Sigmoid colon (tissue), 7 donors: ENCODE measurements at regions of chr9 and their contacts with region 1.

Region 1: GRCh38 chr9:37913480-37914153 is 9.7 kb upstream of the SLC25A51 start:
- DNase-seq: peak; percentile 87
- H3K4me3 ChIP-seq: no peak overlapping the region
- H3K27ac ChIP-seq: peak overlapping the region in 2 of 4 donors; percentile 17 to 18
- H3K4me1 ChIP-seq: peaks cover 0 to 10% (median 2%) of the 10 kb centered on the region in 4 donors
- H3K27me3 ChIP-seq: no peaks in the 10 kb centered on the region
- CTCF ChIP-seq: peak; percentile 94 to 98 (median 96)
- EP300 ChIP-seq: no peak
- POLR2A ChIP-seq: no peak

Region 2: DNA sequence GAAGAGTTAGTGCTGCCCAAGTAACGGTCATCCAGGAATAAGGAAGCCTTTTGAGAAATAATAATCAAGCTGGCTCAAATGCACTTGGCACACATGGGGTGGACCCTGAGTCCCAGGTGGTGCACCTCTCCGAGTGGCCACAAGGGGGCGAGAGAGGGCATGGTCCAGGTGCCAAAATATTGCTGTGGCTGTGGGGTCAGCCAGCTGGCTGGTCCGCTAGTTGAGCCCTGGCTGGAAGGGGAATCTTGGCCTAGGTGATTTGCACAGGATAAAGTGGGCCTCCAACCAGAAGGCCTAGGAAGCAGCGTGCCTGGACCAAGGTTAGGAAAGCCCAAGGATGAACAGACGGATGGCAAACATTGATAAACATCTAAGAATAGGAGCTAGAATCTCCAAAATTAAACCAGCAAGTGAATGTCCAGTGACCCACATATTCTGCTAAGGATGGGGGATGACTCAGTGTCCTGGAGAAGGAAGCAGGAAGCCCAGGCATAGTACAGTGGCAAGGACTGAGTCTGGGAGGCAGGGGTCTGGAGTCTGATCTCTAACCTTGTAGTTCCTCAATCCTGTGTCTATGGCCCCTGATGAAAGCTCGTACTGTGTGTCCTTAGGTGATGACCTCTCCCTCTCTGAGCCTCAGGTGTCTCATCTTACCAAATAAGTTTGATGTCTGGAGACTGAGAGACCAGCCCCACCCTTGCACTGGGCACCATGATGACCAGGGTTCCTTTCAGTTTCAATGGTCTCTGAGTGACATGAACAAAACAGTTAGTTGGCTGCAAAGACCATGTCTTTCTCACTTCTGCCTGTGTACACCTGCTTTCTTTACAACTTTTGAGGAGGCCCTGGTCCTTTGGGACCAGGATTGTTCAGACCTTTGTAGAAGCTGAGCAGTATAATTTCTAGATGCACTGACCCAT is 174.6 kb after region 1 on chr9:
- intact Hi-C with region 1: loop called (anchors 1 kb)
- DNase-seq: peak; percentile 86
- H3K4me3 ChIP-seq: no peak overlapping the region
- H3K27ac ChIP-seq: no peak overlapping the region
- H3K4me1 ChIP-seq: peaks cover 0 to 6% (median 2%) of the 10 kb centered on the region in 4 donors
- H3K27me3 ChIP-seq: no peaks in the 10 kb centered on the region
- CTCF ChIP-seq: peak; percentile 56 to 96 (median 80)
- EP300 ChIP-seq: no peak
- POLR2A ChIP-seq: no peak

Region 3: GRCh38 chr9:38160613-38161215 is 247.1 kb after region 1 on chr9:
- intact Hi-C with region 1: loop called (anchors 2 kb)
- DNase-seq: peak; percentile 70
- H3K4me3 ChIP-seq: no peak overlapping the region
- H3K27ac ChIP-seq: no peak overlapping the region
- H3K4me1 ChIP-seq: no peaks in the 10 kb centered on the region
- H3K27me3 ChIP-seq: no peaks in the 10 kb centered on the region
- CTCF ChIP-seq: peak; percentile 37 to 77 (median 60)
- EP300 ChIP-seq: no peak
- POLR2A ChIP-seq: no peak

Region 4: DNA sequence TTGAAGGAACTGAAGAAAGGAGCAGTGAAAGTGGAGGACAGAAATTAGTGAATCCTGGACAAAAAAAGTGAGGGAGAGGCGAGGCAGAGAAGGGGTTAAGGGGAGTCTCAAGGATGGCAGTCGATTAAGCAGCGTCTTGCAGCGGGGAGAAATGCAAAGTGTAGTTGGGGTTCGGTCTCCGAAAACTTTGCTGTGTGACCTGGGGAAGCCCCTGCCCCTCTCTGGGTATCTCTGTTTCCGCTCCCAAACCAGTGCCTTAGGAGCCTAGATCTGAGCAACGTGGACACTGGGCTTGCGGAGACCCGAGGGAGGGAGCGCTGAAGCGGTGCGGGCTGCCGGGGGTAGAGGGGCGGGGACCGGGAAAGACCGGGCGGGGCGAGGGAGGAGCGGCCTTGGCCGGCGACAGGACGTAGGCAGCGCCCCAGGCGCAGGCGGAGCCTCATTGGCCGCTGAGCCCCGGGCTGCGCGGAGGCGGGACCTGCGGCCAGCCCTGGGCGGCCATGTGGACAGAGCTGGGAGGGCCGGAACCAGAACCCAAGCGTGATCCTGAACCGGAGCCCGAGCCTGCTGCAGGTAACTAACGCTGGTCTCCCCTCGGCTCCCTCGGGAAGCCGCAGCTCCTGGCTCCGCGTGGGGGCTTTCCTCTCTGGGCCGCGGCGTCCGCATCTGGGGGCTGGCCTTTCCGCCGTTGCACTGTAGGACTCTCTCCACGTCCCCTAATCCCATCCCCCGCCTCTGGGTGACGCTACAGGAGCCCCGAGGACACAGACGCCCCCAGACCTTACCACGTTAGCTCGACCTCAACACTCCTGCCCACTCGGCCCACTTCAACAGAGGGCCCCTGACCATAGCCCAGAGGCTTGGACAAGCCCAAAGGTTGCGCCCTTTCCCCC is 478.9 kb after region 1 on chr9 and contains the start of gene ALDH1B1:
- intact Hi-C with region 1: loop called (anchors 5 kb)
- DNase-seq: peak; percentile 93
- H3K4me3 ChIP-seq: peak within 1 kb of the TSS; percentile 64 to 88 (median 72)
- H3K27ac ChIP-seq: peak within 1 kb of the TSS; percentile 84 to 97 (median 88)
- H3K4me1 ChIP-seq: peaks cover 0 to 84% (median 59%) of the 10 kb centered on the region in 4 donors
- H3K27me3 ChIP-seq: no peaks in the 10 kb centered on the region
- CTCF ChIP-seq: no peak
- EP300 ChIP-seq: peak in 1 of 4 donors; percentile 7
- POLR2A ChIP-seq: peak; percentile 65 to 75
- total RNA-seq, gene ALDH1B1: 35.7 to 162 (median 101) TPM